A673 (cell line): ENCODE measurements at regions of chr15 and their contacts with region 1.

Region 1: DNA sequence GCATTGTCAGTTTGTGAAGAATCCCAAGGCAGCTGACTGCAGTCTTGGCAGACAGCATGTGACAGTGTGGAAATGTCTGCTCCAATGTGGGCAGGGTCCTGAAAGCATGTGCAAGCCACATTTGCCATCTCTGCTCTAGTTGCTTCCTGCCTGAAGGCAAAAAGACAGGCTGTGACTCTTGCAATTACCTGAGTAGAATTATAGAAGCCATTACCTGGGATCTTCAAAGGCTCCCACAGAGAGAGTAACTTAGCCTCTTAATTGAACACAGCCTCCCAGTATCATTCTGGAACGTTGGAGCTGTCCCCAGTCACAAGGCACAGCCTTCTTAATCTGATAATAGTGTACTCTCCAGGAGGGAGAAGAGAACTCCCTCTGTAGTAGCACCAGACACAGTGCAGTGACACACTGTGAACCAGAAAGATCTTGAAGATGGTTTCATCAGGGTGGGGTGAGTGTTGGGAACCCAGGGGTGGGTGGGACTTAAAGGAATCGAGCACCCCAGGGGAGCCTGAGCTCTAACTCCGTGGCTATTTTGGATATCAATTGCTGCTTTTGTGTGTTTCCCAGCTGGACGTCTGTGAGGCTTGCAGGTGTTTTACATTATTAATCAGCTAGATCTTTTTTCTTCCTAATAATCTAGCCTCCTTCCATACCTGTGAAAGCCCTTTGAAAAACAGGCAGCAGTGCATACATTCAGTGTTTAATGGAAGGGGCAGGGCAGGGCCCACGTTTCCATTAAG is 40.6 kb upstream of the GLCE start:
- DNase-seq: peak; percentile 51
- H3K4me3 ChIP-seq: no peak overlapping the region
- H3K27ac ChIP-seq: no peak overlapping the region
- H3K4me1 ChIP-seq: peaks cover 18% of the 10 kb centered on the region
- H3K27me3 ChIP-seq: no peaks in the 10 kb centered on the region
- CTCF ChIP-seq: no peak

Region 2: GRCh38 chr15:69104050-69104750 is 15.6 kb before region 1 on chr15:
- CTCF ChIA-PET with region 1: no interaction called
- POLR2A ChIA-PET with region 1: no interaction called
- intact Hi-C with region 1: no loop called
- DNase-seq: no peak
- H3K4me3 ChIP-seq: no peak overlapping the region
- H3K27ac ChIP-seq: no peak overlapping the region
- H3K4me1 ChIP-seq: peaks cover 7% of the 10 kb centered on the region
- H3K27me3 ChIP-seq: no peaks in the 10 kb centered on the region
- CTCF ChIP-seq: no peak

Region 3: GRCh38 chr15:69311319-69311721 is 191.5 kb after region 1 on chr15:
- CTCF ChIA-PET with region 1: no interaction called
- POLR2A ChIA-PET with region 1: no interaction called
- intact Hi-C with region 1: no loop called
- DNase-seq: no peak
- H3K4me3 ChIP-seq: no peak overlapping the region
- H3K27ac ChIP-seq: no peak overlapping the region
- H3K4me1 ChIP-seq: peaks cover 7% of the 10 kb centered on the region
- H3K27me3 ChIP-seq: no peaks in the 10 kb centered on the region
- CTCF ChIP-seq: no peak

Region 4: GRCh38 chr15:69451951-69452691 is 332.3 kb after region 1 on chr15:
- CTCF ChIA-PET with region 1: interaction called, 12 read pairs
- POLR2A ChIA-PET with region 1: no interaction called
- intact Hi-C with region 1: no loop called
- DNase-seq: peak; percentile 54
- H3K4me3 ChIP-seq: peak overlapping the region; percentile 83
- H3K27ac ChIP-seq: peak overlapping the region; percentile 84
- H3K4me1 ChIP-seq: peaks cover 22% of the 10 kb centered on the region
- H3K27me3 ChIP-seq: no peaks in the 10 kb centered on the region
- CTCF ChIP-seq: no peak